PC-9 (cell line): ENCODE measurements at regions of chr6 and their contacts with region 1.

Region 1: DNA sequence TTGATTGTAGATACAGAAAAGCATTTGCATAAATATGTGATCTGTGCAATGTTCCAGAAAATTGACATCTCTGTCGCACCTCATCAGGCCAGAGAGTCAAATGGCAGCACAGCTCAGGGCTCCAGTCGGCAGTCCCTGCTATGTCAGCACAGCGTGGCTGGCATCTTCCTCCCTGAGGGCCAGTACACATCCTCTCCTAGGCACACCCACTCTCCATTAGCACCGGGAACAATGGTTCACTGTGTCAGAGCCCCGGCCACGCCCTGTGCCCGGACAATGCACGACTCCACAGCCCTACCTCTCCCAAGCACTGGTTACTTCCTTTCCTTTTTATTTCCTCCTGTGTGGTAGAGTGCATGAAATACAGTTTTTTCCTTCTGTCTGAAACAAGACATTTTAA is 114.9 kb downstream of the FOXC1 start:
- DNase-seq: peak; percentile 34 to 71
- H3K4me3 ChIP-seq: no peak overlapping the region
- H3K27ac ChIP-seq: peak overlapping the region; percentile 41
- H3K4me1 ChIP-seq: peaks cover 18% of the 10 kb centered on the region
- H3K27me3 ChIP-seq: no peaks in the 10 kb centered on the region
- CTCF ChIP-seq: no peak

Region 2: GRCh38 chr6:1636971-1637871 is 87.4 kb before region 1 on chr6:
- CTCF ChIA-PET with region 1: no interaction called
- POLR2A ChIA-PET with region 1: no interaction called
- intact Hi-C with region 1: no loop called
- DNase-seq: peak; percentile 89 to 90
- H3K4me3 ChIP-seq: no peak overlapping the region
- H3K27ac ChIP-seq: peak overlapping the region; percentile 76
- H3K4me1 ChIP-seq: peaks cover 55% of the 10 kb centered on the region
- H3K27me3 ChIP-seq: no peaks in the 10 kb centered on the region
- CTCF ChIP-seq: no peak

Region 3: DNA sequence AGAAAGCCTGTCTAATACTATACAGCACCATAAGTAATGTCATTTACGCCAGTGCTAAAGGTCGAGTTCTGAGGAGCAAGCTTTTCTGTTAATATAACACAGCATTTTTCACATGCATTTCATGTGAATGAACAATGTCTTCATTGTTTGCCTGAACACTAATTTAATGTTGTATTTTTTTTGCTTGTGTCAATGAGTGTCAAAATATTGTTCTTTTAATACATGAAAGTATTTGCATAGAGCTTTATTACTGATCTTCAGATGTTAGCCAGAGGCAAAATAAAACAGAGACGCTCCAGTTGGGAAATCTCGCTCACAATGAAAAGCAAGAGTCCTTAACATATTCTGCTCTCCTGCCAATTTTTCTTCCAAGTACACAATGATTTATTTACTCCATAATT is 36.9 kb after region 1 on chr6:
- CTCF ChIA-PET with region 1: no interaction called
- POLR2A ChIA-PET with region 1: no interaction called
- intact Hi-C with region 1: loop called (anchors 5 kb)
- DNase-seq: no peak
- H3K4me3 ChIP-seq: no peak overlapping the region
- H3K27ac ChIP-seq: no peak overlapping the region
- H3K4me1 ChIP-seq: peaks cover 26% of the 10 kb centered on the region
- H3K27me3 ChIP-seq: no peaks in the 10 kb centered on the region
- CTCF ChIP-seq: no peak

Region 4: DNA sequence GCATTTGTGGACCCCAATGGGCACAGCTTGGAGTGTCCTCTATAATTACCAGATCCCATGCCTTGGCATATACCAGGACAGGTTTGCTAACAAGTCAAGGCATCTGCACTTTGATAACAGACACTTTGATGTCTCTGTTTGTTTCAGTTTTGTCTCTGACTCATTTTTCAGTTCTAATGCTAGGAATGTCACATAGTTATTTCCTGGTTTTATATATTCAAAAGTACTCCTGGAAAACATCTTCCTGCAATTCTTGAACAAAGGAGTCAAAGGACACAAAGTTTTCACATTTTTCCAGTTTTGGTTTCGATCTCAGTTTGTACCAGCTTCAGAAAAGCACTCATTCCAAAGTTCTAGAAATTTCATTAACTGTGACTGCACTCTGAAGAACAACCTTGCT is 73.2 kb after region 1 on chr6:
- CTCF ChIA-PET with region 1: no interaction called
- POLR2A ChIA-PET with region 1: interaction called, 12 read pairs
- intact Hi-C with region 1: no loop called
- DNase-seq: peak in 1 of 2 experiments; percentile 74
- H3K4me3 ChIP-seq: no peak overlapping the region
- H3K27ac ChIP-seq: peak overlapping the region; percentile 35; the same call in 1 of the 2 replicates
- H3K4me1 ChIP-seq: peaks cover 11% of the 10 kb centered on the region
- H3K27me3 ChIP-seq: no peaks in the 10 kb centered on the region
- CTCF ChIP-seq: no peak

Region 5: GRCh38 chr6:1893470-1894130 is 169.0 kb after region 1 on chr6:
- CTCF ChIA-PET with region 1: no interaction called
- POLR2A ChIA-PET with region 1: interaction called, 10 read pairs
- intact Hi-C with region 1: no loop called
- DNase-seq: no peak
- H3K4me3 ChIP-seq: no peak overlapping the region
- H3K27ac ChIP-seq: no peak overlapping the region
- H3K4me1 ChIP-seq: peaks cover 16% of the 10 kb centered on the region
- H3K27me3 ChIP-seq: no peaks in the 10 kb centered on the region
- CTCF ChIP-seq: no peak

Region 6: DNA sequence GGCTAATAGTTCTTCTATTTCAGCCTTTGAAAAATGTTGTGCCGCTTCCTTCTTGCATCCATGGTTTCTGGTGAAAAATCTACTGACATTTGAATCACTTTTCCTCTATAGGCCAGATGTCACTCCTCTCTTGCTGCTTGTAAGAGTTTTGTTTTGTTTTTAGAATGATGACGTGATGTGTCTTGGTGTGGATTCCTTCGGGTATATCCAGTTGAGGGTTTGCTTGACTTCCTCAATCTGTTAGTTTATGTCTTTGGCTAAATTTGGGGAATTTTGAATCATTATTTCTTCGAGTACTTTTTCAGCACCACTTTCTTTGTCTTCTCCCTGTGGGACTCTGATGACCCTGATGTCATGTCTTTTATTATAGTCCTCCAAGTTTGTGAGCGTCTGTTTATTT is 850.6 kb after region 1 on chr6:
- CTCF ChIA-PET with region 1: no interaction called
- POLR2A ChIA-PET with region 1: no interaction called
- intact Hi-C with region 1: no loop called
- DNase-seq: no peak
- H3K4me3 ChIP-seq: no peak overlapping the region
- H3K27ac ChIP-seq: no peak overlapping the region
- H3K4me1 ChIP-seq: peaks cover 20% of the 10 kb centered on the region
- H3K27me3 ChIP-seq: no peaks in the 10 kb centered on the region
- CTCF ChIP-seq: no peak